ENCODE measurements at regions of chr19 and their contacts with region 1.

Region 1: GRCh38 chr19:35044317-35045117 is 3.0 kb downstream of the HPN start:
- DNase-seq: peak; percentile 77
- H3K4me3 Mint-ChIP-seq: no peak overlapping the region
- H3K27ac Mint-ChIP-seq: no peak overlapping the region
- H3K4me1 Mint-ChIP-seq: peaks cover 6% of the 10 kb centered on the region
- H3K27me3 Mint-ChIP-seq: no peaks in the 10 kb centered on the region
- CTCF ChIP-seq: peak; percentile 94

Region 2: GRCh38 chr19:34808566-34808965 is 236.0 kb before region 1 on chr19:
- CTCF ChIA-PET with region 1: no interaction called
- POLR2A ChIA-PET with region 1: no interaction called
- intact Hi-C with region 1: no loop called
- DNase-seq: peak; percentile 41
- H3K4me3 Mint-ChIP-seq: no peak overlapping the region
- H3K27ac Mint-ChIP-seq: no peak overlapping the region
- H3K4me1 Mint-ChIP-seq: no peaks in the 10 kb centered on the region
- H3K27me3 Mint-ChIP-seq: no peaks in the 10 kb centered on the region
- CTCF ChIP-seq: no peak

Region 3: DNA sequence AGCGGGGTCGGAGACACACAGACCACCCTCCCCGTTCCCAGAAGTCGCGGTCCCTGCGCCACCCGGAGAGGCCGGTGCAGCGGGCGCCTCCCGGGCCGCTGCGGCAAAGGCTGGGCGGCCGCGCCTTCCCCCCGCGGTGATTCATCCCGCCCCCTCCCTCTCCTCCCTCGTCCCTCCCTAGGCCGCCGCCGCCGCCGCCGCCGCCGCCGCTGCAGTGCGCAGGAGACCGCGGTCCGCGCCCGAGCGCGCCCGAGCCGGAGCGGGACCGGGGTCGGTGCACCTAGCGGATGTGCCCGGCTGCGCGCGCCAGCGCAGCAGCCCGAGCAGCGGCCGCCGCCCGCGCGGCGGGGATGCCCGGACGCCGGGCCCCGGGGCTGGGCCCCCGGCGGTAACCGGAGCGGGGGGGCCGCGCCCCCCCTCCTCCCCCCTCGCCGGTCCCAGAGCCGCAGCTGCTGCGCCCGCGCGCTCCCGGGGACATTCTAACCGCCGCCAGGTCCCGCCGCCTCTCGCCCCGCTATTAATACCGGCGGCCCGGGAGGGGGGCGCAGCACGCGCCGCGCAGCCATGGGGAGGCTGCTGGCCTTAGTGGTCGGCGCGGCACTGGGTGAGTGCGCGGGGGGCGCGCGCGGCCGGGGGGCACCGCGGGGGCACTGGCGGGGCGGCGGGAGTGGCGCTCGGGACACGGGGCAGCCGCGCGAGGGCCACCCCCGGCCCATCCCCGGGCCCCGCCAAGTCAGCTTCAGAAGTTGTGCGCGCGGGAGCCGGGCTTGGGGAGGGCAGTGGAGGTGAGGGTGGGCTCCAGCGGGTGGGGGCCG is 14.1 kb before region 1 on chr19 and contains the start of gene SCN1B:
- CTCF ChIA-PET with region 1: interaction called, 13 read pairs
- POLR2A ChIA-PET with region 1: interaction called, 3 read pairs
- intact Hi-C with region 1: no loop called
- DNase-seq: peak; percentile 74
- H3K4me3 Mint-ChIP-seq: peak within 1 kb of the TSS; percentile 52
- H3K27ac Mint-ChIP-seq: no peak within 1 kb of the TSS
- H3K4me1 Mint-ChIP-seq: peaks cover 6% of the 10 kb centered on the region
- H3K27me3 Mint-ChIP-seq: peaks cover 31% of the 10 kb centered on the region
- CTCF ChIP-seq: no peak
- total RNA-seq, gene SCN1B: 0.19 and 0.27 TPM in 2 replicates

Region 4: DNA sequence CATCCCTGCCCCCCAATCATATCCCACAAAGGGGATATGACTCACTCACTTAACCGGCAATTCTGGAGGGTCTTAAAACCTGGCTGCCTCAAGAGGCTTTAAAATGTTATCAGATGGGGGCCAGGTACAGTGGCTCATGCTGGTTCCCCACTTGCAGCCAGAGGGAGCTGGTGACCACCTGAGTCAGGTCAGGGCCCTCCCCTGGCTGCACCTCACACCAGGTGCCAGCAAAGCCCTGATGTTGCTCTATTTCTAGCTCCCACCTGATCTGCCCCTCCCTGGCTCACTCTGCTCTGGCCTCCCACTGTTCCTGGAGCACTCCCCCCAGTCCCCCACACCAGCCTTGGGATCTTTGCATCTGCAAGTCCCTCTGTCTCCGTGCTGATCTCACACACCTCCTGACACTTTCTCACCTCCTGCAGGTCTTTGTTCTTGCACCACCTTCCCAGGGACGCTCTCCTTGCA is 11.2 kb after region 1 on chr19:
- CTCF ChIA-PET with region 1: interaction called, 75 read pairs
- POLR2A ChIA-PET with region 1: interaction called, 3 read pairs
- intact Hi-C with region 1: no loop called
- DNase-seq: peak; percentile 34
- H3K4me3 Mint-ChIP-seq: no peak overlapping the region
- H3K27ac Mint-ChIP-seq: no peak overlapping the region
- H3K4me1 Mint-ChIP-seq: no peaks in the 10 kb centered on the region
- H3K27me3 Mint-ChIP-seq: peaks cover 18% of the 10 kb centered on the region
- CTCF ChIP-seq: peak; percentile 21

Region 5: DNA sequence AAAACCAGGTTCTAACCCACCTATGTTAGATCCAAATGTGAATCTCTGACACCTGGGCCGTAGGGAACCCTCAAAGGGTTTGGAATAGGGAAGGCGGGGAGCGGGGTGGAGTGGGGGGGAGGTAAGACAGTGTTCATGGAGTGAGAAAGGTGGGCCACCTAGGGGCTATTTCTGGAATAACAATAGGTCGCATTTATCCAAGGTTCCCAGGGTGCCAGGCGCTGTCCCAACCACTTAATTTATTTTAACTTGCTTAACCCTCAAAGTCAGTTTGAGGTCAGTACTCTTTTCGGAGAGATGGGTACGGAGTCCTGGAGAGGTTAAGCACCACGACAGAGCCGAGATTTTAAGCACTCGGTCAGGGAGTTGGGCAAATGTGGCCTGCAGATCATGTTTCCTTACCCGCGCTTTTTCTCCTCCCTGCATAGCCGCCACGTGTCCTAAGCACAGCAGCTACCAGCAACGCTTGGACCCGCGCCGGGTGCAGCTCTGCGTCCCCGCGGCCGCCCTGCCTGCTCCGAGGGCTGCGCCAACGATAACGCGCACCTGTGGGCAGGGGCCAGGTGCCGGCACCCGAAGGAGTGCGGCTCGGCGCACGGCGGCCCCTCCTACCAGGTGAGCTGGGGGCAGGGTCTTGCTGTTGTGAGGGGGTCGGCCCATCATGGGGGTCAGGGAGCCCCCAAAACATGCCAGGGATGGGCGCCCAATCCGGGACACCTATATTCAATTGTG is 46.2 kb after region 1 on chr19:
- CTCF ChIA-PET with region 1: interaction called, 23 read pairs
- POLR2A ChIA-PET with region 1: no interaction called
- intact Hi-C with region 1: loop called (anchors 1 kb)
- DNase-seq: peak; percentile 73
- H3K4me3 Mint-ChIP-seq: no peak overlapping the region
- H3K27ac Mint-ChIP-seq: no peak overlapping the region
- H3K4me1 Mint-ChIP-seq: peaks cover 10% of the 10 kb centered on the region
- H3K27me3 Mint-ChIP-seq: no peaks in the 10 kb centered on the region
- CTCF ChIP-seq: peak; percentile 46

Region 6: DNA sequence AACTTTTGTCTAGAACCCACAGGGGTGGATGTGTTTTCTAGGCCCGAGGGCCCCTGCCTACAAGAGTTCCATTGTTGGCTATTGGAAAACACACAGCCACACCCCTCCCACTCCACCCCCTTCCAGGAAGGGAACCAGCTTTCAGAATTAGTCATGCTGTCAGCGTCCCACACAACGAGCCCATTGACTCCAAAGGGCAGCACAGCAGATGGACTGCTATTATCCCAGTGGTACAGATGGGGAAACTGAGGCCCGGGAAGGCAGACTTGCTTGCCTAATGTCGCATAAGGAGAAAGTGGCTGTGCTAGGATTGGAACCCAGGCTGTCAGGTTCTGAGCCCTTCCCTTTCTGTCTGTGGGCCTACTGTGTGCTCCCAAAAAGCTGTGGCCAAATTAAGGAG is 63.0 kb after region 1 on chr19:
- CTCF ChIA-PET with region 1: interaction called, 13 read pairs
- POLR2A ChIA-PET with region 1: no interaction called
- intact Hi-C with region 1: no loop called
- DNase-seq: peak; percentile 86
- H3K4me3 Mint-ChIP-seq: peak overlapping the region; percentile 37
- H3K27ac Mint-ChIP-seq: peak overlapping the region; percentile 71
- H3K4me1 Mint-ChIP-seq: peaks cover 21% of the 10 kb centered on the region
- H3K27me3 Mint-ChIP-seq: no peaks in the 10 kb centered on the region
- CTCF ChIP-seq: no peak

Region 7: DNA sequence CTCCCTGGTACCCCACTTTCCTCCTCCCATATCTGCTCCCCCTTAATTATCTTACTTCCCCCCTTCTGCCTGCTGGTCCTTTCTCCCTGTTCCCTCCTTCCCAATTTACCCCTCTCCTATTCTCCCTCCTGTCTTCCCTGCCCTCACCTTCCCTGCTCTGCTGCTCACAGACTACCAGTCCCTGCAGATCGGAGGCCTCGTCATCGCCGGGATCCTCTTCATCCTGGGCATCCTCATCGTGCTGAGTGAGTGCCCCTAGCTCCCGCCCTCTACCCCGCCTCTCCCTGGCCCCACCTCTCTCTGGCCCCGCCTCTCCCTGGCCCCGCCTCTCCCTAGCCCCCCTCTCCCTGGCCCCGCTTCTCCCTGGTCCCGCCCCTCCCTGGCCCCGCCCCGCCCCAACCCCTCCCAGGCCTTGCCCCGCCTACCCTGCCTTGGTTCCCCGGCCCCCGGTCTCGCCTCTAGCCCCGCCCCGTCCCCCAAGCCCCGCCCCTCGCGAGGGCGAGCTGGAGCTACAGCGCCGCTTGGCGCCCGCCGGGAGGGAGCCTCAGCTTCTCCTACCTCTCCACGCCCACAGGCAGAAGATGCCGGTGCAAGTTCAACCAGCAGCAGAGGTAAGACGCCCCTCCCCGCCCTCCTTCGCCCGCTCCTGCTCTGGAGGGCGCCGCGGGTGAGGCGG is 96.6 kb after region 1 on chr19:
- CTCF ChIA-PET with region 1: interaction called, 57 read pairs
- POLR2A ChIA-PET with region 1: no interaction called
- intact Hi-C with region 1: loop called (anchors 1 kb)
- DNase-seq: peak; percentile 93
- H3K4me3 Mint-ChIP-seq: no peak overlapping the region
- H3K27ac Mint-ChIP-seq: no peak overlapping the region
- H3K4me1 Mint-ChIP-seq: peaks cover 15% of the 10 kb centered on the region
- H3K27me3 Mint-ChIP-seq: peaks cover 19% of the 10 kb centered on the region
- CTCF ChIP-seq: peak; percentile 57

Region 8: DNA sequence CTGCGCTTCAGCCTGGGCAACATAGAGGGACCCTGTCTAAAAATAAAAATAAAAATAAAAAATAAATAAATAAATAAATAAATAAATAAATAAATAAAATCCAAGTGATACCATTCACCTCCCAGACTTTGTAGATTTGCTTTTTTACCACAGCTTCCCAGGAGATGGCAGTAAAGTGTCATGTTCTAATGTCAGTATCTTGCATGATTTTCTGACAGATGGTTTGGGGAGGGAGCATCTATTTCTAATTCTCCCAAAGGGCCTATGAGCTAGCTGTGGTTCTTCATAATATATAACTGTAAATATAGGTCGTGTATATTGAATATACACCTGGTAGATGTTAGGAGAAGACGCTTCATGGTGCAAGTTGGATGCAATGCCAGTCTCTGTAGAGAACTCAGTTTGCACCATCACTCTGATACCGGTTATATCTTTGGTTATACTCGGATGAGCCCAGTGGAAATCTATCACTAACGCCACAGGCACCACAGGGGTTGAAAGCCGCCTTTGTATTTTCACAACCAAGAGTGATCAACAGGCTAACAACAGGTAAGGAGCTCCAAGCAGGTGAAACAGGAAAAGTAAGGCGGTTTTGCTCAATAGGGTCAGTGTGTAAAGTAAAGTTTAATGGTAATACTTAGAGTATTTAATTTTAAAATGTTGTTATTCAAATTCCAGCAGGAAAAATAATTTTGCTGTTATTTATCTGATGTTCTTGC is 837.8 kb after region 1 on chr19:
- CTCF ChIA-PET with region 1: no interaction called
- POLR2A ChIA-PET with region 1: no interaction called
- intact Hi-C with region 1: no loop called
- DNase-seq: peak; percentile 81
- H3K4me3 Mint-ChIP-seq: no peak overlapping the region
- H3K27ac Mint-ChIP-seq: no peak overlapping the region
- H3K4me1 Mint-ChIP-seq: peaks cover 9% of the 10 kb centered on the region
- H3K27me3 Mint-ChIP-seq: peaks cover 11% of the 10 kb centered on the region
- CTCF ChIP-seq: peak; percentile 75

Measured in MCF 10A (cell line).